GM10248 (cell line): ENCODE measurements at regions of chr19 and their contacts with region 1.

Region 1: DNA sequence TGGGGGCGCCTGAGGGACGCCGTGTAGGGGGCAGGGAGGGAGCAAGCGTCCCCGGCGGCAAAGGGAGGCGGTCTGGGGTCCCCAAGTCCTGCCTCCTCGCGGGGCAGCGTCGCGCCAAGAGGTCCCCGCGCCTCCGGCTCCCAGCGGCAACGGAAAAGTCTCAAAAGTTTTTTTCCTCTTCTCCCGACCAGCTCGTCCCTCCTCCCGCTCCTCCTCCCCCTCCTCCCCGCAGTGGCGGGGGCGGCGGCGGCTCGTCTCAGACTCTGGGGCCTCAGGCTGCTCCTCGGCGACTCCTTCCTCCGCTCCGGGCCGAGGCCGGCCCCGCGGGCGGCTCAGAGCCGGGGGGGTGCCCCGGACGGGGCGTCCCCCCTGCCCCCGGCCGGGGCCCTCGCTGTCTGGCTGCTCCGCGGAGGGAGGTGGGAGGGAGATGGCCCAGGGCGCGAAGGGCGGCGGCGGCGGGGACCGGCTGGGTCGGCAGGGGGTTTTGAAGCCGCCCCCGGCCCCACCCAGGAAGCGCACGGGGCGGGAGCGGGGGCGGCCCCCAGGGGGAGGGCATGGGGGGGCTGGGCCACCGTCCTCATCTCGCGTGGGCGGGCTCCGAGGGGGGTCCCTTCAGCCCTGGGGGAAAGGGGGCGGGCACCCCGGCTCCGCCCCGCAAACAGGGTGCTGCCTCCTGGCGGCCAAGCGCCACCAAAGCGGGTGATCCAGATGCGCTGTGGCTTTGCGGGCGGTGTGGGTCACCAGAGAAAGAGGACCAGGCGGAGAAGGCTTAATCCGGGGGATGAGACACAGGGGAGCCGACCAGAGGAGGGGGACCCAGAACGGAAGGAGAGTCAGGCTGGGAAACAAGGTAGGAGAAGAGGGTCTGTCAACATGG is at the start of gene TGFB1:
- DNase-seq: peak; percentile 97
- CTCF ChIP-seq: peak; percentile 90

Region 2: GRCh38 chr19:41288673-41289505 is 64.8 kb before region 1 on chr19:
- CTCF ChIA-PET with region 1: no interaction called
- POLR2A ChIA-PET with region 1: interaction called, 12 read pairs
- DNase-seq: no peak
- CTCF ChIP-seq: no peak

Region 3: DNA sequence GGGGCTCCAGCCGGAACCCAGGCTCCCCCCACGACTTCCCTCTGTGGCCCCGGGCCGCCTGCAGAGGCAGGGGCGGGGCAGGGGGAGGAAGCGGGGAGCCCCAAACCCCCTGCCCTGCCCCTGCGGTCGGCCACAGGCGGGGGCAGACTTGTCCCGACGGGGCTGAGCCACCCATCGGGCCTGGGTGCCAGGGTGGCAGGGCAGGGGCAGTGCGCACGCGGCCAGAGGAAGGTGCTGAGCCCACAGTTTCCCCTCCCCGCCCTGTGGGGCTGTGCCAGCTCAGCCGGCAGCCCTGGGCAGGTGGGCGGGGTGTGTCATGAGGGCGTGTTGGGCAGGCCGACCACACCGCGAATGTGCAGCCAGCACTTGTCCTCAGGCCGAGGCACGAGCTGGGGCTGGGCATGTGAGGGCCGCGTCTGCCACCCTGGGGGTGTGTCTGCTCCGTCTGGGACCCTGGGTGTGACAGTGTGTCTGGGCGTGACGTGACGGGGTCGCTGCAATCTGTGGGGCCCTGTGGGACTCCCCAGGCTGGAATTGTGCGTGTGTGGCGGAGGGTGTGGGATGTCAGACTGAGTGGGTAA is 26.0 kb before region 1 on chr19:
- CTCF ChIA-PET with region 1: interaction called, 18 read pairs
- POLR2A ChIA-PET with region 1: no interaction called
- DNase-seq: peak; percentile 85
- CTCF ChIP-seq: no peak

Region 4: DNA sequence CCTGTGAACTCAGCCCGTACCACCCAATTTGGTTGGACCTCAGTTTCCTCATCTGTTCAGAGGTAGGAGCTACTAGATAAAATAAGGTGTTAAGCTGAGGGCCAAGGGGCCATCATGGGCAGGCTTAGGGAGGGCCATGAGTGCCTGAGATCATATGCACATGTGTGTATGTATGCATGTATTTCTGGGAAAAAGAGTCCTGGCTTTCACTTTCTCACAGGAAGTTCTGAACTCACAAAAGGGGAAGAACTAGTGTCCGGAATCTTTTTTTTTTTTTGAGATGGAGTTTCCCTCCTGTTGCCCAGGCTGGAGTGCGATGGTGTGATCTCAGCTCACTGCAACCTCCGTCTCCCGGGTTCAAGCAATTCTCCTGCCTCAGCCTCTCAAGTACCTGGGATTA is 18.9 kb before region 1 on chr19:
- CTCF ChIA-PET with region 1: interaction called, 27 read pairs
- POLR2A ChIA-PET with region 1: interaction called, 3 read pairs
- DNase-seq: no peak
- CTCF ChIP-seq: no peak

Region 5: GRCh38 chr19:41341669-41342490 is 11.8 kb before region 1 on chr19:
- CTCF ChIA-PET with region 1: interaction called, 27 read pairs
- POLR2A ChIA-PET with region 1: no interaction called
- DNase-seq: no peak
- CTCF ChIP-seq: peak; percentile 19

Region 6: GRCh38 chr19:41363753-41364523 is 10.2 kb after region 1 on chr19 and contains the start of gene B9D2:
- CTCF ChIA-PET with region 1: interaction called, 68 read pairs
- POLR2A ChIA-PET with region 1: interaction called, 25 read pairs
- DNase-seq: peak; percentile 97
- CTCF ChIP-seq: no peak

Region 7: GRCh38 chr19:41422456-41422855 is 68.8 kb after region 1 on chr19:
- CTCF ChIA-PET with region 1: no interaction called
- POLR2A ChIA-PET with region 1: no interaction called
- DNase-seq: no peak
- CTCF ChIP-seq: no peak